Activated naive CD4-positive, alpha-beta T cell treated with anti-CD3 and anti-CD28 coated beads, Interleukin-2, amount 10 ng/mL, durations not matched to agents 7 days and 5 days (primary cell): ENCODE measurements at regions of chr14 and their contacts with region 1.

Region 1: DNA sequence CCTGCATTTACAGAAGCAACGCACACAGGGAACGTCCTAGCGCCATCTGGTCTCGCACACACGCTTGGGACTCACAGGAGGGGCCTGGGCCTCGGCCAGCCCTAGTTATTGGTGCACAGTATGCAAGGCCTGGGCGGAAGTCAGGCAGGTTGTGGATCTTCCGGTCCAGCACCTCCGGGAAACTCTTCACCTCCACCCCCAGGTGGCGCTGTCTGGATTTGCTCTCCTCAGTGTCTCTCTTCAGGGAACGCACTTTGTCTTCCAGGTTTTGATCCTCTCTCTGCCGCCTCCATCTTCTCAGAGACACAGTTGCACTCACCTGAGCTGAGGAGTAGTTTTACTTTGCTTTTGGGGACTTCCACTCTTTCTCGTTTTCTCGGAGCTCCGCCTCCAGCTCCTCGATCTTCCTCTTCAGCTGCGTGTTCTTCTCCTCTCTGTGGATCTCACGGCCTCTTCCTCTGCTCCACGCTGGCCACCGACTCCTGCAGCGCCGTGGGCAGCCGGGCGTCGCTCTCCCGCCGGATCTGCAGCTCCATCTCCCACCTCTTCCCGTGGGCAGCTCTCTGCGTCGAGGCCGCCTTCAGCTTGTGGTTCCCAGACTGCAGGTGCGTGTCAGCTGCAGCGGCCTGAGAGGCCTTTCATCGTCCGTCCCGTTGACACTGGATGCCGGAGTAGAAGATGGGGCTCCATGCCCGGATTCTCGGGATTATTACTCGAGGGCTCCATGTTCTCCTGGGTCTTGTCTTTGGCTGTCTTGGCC is 933.8 kb downstream of the TMEM121 start:
- DNase-seq: peak; percentile 73
- H3K4me3 Mint-ChIP-seq: no peak overlapping the region
- H3K27ac Mint-ChIP-seq: no peak overlapping the region
- H3K4me1 Mint-ChIP-seq: peaks cover 2% of the 10 kb centered on the region
- H3K27me3 Mint-ChIP-seq: peaks cover 21% of the 10 kb centered on the region

Region 2: DNA sequence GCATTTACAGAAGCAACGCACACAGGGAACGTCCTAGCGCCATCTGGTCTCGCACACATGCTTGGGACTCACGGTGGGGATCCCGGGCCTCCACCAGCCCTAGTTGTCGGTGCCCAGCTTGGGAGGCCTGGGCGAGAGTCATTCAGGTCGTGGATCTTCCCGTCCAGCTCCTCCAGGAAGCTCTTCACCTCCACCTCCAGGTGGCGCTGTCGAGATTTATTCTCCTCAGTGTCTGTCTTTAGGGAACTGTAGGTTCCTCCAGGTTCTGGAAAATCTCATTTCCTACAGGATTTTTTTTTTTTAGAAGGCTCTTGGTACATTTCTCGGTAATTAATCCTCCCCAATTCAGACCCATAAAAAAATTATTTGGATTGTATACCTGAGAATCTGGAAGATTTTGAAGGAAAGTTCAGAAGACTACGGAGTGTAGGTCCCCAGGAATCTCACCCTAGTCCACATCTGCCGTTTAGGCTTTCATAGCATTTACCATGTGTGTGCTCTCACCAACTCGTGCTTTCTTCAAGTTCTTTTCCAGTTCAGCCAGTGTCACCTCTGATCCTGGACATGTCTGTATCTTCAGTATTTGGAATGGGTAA is 23.7 kb before region 1 on chr14:
- CTCF ChIA-PET with region 1: no interaction called
- DNase-seq: peak; percentile 64
- H3K4me3 Mint-ChIP-seq: no peak overlapping the region
- H3K27ac Mint-ChIP-seq: no peak overlapping the region
- H3K4me1 Mint-ChIP-seq: peaks cover 6% of the 10 kb centered on the region
- H3K27me3 Mint-ChIP-seq: peaks cover 38% of the 10 kb centered on the region

Region 3: DNA sequence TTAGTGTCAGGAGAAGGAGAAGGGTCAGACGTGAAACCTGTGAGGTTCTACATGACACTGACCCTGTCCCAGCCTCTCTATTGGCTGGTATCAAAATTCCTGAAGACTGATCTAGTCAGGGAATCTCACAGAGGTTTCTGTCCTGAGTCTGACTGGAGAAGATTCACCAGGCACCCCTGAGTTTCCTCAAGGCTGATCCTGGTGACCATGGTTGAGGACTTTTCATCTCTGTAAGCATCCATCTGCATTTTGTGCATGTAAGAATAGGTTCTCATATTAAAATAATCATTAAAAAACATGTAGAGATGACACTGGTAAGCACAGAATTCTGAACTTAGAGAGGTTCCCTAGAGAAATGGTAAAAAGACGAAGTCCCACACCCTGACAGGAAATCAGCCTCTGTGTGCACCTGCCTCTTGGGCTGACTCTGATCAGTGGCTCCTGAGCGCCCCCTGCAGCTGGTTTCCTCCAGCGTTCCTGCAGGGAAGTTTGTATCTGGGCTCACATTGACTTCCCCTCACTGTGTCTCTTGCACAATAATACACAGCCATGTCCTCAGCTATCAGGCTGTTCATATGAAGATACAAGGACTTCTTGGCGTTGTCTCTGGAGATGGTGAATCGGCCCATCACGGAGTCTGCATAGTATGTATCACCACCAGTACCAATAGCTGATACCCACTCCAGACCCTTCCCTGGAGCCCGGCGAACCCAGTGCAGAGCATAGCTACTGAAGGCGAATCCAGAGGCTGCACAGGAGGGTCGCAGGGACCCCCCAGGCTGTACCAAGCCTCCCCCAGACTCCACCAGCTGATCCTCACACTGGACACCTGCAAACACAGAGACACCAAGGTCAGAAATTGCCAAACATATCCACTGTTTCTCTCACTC is 58.1 kb after region 1 on chr14:
- CTCF ChIA-PET with region 1: interaction called, 24 read pairs
- DNase-seq: peak; percentile 89
- H3K4me3 Mint-ChIP-seq: no peak overlapping the region
- H3K27ac Mint-ChIP-seq: no peak overlapping the region
- H3K4me1 Mint-ChIP-seq: peaks cover 15% of the 10 kb centered on the region
- H3K27me3 Mint-ChIP-seq: peaks cover 21% of the 10 kb centered on the region

Region 4: GRCh38 chr14:106802423-106803364 is 342.5 kb after region 1 on chr14:
- CTCF ChIA-PET with region 1: no interaction called
- DNase-seq: no peak
- H3K4me3 Mint-ChIP-seq: no peak overlapping the region
- H3K27ac Mint-ChIP-seq: no peak overlapping the region
- H3K4me1 Mint-ChIP-seq: no peaks in the 10 kb centered on the region
- H3K27me3 Mint-ChIP-seq: peaks cover 47% of the 10 kb centered on the region